ENCODE measurements at regions of chr10 and their contacts with region 1.

Region 1: DNA sequence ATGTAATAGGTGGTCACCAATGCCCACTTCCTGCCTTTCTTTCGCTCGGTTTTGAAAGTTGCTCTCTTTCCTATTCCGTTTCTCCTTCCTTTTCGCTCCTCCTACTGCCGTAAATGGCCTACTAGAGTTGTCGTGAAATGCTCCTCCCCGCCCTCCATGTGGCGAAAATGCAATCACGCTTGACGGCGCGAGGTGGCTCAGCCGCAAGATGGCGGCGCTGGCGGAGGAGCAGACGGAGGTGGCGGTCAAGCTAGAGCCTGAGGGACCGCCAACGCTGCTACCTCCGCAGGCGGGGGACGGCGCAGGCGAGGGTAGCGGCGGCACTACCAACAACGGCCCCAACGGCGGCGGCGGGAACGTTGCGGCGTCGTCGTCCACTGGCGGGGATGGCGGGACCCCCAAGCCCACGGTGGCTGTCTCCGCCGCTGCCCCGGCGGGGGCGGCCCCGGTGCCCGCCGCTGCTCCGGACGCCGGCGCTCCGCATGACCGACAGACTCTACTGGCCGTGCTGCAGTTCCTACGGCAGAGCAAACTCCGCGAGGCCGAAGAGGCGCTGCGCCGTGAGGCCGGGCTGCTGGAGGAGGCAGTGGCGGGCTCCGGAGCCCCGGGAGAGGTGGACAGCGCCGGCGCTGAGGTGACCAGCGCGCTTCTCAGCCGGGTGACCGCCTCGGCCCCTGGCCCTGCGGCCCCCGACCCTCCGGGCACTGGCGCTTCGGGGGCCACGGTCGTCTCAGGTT is at the start of gene TAF5:
- DNase-seq: peak; percentile 71 to 95 (median 87)
- ATAC-seq: peak; percentile 67 to 78 (median 74)
- H3K4me3 ChIP-seq: peak within 1 kb of the TSS; percentile 63 to 83
- H3K4me3 Mint-ChIP-seq: peak within 1 kb of the TSS; percentile 83 to 93 (median 89)
- H3K27ac ChIP-seq: peak within 1 kb of the TSS; percentile 35
- H3K27ac Mint-ChIP-seq: peak within 1 kb of the TSS; percentile 91 to 92
- H3K4me1 ChIP-seq: peaks cover 9 to 22% of the 10 kb centered on the region in 2 experiments
- H3K4me1 Mint-ChIP-seq: peaks cover 17 to 23% (median 22%) of the 10 kb centered on the region in 3 donors
- H3K27me3 ChIP-seq: no peaks in the 10 kb centered on the region
- H3K27me3 Mint-ChIP-seq: no peaks in the 10 kb centered on the region
- total RNA-seq, gene TAF5: 5.6 to 7.0 (median 6.3) TPM

Region 2: DNA sequence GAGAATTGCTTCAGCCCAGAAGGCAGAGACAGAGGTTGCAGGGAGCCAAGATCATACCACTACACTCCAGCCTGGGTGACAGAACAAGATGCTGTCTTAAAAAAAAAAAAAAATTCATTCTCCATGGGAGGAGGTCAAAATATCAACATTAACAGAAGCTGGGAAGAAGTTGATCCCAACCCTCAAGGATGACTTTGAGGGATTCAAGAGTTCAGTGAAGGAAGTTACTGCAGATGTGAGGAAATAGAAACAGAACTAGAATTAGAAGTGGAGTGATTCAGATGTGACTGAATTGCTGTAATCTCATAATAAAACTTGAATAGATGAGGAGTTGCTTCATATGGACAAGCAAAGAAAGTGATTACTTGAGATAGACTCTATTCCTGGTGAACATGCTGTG is 142.0 kb before region 1 on chr10:
- CTCF ChIA-PET with region 1: no interaction called
- POLR2A ChIA-PET with region 1: no interaction called
- DNase-seq: no peak
- ATAC-seq: no peak
- H3K4me3 ChIP-seq: no peak overlapping the region
- H3K4me3 Mint-ChIP-seq: no peak overlapping the region
- H3K27ac ChIP-seq: no peak overlapping the region
- H3K27ac Mint-ChIP-seq: no peak overlapping the region
- H3K4me1 ChIP-seq: no peaks in the 10 kb centered on the region
- H3K4me1 Mint-ChIP-seq: no peaks in the 10 kb centered on the region
- H3K27me3 ChIP-seq: peaks cover 0 to 2% of the 10 kb centered on the region in 2 experiments
- H3K27me3 Mint-ChIP-seq: no peaks in the 10 kb centered on the region

Region 3: DNA sequence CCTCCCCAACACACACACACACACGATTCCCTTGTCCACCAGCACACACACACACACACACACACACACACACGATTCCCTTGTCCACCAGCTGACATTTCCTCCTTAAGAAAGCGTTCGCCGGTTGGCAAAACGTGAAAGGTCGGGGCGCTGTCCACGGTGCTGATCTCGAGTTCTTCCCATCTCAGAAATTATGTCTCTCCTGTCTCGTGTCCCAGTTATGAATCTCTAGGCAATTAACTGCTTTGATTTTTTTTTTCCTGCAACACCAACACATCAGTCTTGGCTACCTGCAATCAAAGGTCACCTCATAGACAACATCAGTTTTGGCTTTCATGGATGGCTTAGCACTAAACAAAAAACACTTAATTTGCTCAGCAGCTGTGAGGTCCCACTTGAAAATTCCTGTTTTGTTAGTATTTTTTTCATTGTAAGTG is 89.1 kb before region 1 on chr10:
- CTCF ChIA-PET with region 1: no interaction called
- POLR2A ChIA-PET with region 1: no interaction called
- DNase-seq: peak in 24 of 35 experiments; percentile 3 to 56 (median 24)
- ATAC-seq: no peak
- H3K4me3 ChIP-seq: no peak overlapping the region
- H3K4me3 Mint-ChIP-seq: peak overlapping the region in 1 of 3 donors; percentile 45
- H3K27ac ChIP-seq: no peak overlapping the region
- H3K27ac Mint-ChIP-seq: peak overlapping the region in 1 of 2 donors; percentile 74
- H3K4me1 ChIP-seq: peaks cover 2 to 16% of the 10 kb centered on the region in 2 experiments
- H3K4me1 Mint-ChIP-seq: peaks cover 9 to 18% (median 16%) of the 10 kb centered on the region in 3 donors
- H3K27me3 ChIP-seq: peaks cover 23 to 50% of the 10 kb centered on the region in 2 experiments
- H3K27me3 Mint-ChIP-seq: peaks cover 55 to 68% of the 10 kb centered on the region in 2 donors

Region 4: GRCh38 chr10:103307594-103307993 is 60.4 kb before region 1 on chr10:
- CTCF ChIA-PET with region 1: no interaction called
- POLR2A ChIA-PET with region 1: no interaction called
- DNase-seq: no peak
- ATAC-seq: no peak
- H3K4me3 ChIP-seq: no peak overlapping the region
- H3K4me3 Mint-ChIP-seq: no peak overlapping the region
- H3K27ac ChIP-seq: no peak overlapping the region
- H3K27ac Mint-ChIP-seq: no peak overlapping the region
- H3K4me1 ChIP-seq: no peaks in the 10 kb centered on the region
- H3K4me1 Mint-ChIP-seq: no peaks in the 10 kb centered on the region
- H3K27me3 ChIP-seq: no peaks in the 10 kb centered on the region
- H3K27me3 Mint-ChIP-seq: no peaks in the 10 kb centered on the region

Region 5: GRCh38 chr10:103333925-103334520 is 33.9 kb before region 1 on chr10:
- CTCF ChIA-PET with region 1: no interaction called
- POLR2A ChIA-PET with region 1: interaction called in 1 of 2 experiments, 13 read pairs
- DNase-seq: peak in 1 of 35 experiments; percentile 43
- ATAC-seq: no peak
- H3K4me3 ChIP-seq: no peak overlapping the region
- H3K4me3 Mint-ChIP-seq: no peak overlapping the region
- H3K27ac ChIP-seq: no peak overlapping the region
- H3K27ac Mint-ChIP-seq: no peak overlapping the region
- H3K4me1 ChIP-seq: no peaks in the 10 kb centered on the region
- H3K4me1 Mint-ChIP-seq: no peaks in the 10 kb centered on the region
- H3K27me3 ChIP-seq: no peaks in the 10 kb centered on the region
- H3K27me3 Mint-ChIP-seq: no peaks in the 10 kb centered on the region

Region 6: GRCh38 chr10:103458720-103459119 is 90.8 kb after region 1 on chr10 and contains the start of gene CALHM1:
- CTCF ChIA-PET with region 1: no interaction called
- POLR2A ChIA-PET with region 1: no interaction called
- DNase-seq: no peak
- ATAC-seq: peak in 2 of 4 experiments; percentile 36 to 41
- H3K4me3 ChIP-seq: no peak within 1 kb of the TSS
- H3K4me3 Mint-ChIP-seq: no peak within 1 kb of the TSS
- H3K27ac ChIP-seq: no peak within 1 kb of the TSS
- H3K27ac Mint-ChIP-seq: no peak within 1 kb of the TSS
- H3K4me1 ChIP-seq: peaks cover 2 to 27% of the 10 kb centered on the region in 2 experiments
- H3K4me1 Mint-ChIP-seq: peaks cover 0 to 16% (median 12%) of the 10 kb centered on the region in 3 donors
- H3K27me3 ChIP-seq: no peaks in the 10 kb centered on the region
- H3K27me3 Mint-ChIP-seq: no peaks in the 10 kb centered on the region
- total RNA-seq, gene CALHM1: not detected

Measured in T-cell (primary cell).